ENCODE measurements at regions of chr1 and their contacts with region 1.

Region 1: GRCh38 chr1:220272047-220272840 is at the start of gene RAB3GAP2:
- DNase-seq: peak; percentile 96
- H3K4me3 Mint-ChIP-seq: no peak within 1 kb of the TSS
- H3K27ac Mint-ChIP-seq: no peak within 1 kb of the TSS
- H3K4me1 Mint-ChIP-seq: peaks cover 17% of the 10 kb centered on the region
- H3K27me3 Mint-ChIP-seq: peaks cover 12% of the 10 kb centered on the region
- total RNA-seq, gene RAB3GAP2: 55.0 and 60.0 TPM in 2 replicates

Region 2: GRCh38 chr1:219173758-219174588 is 1098.3 kb before region 1 on chr1 and contains the start of gene LYPLAL1:
- intact Hi-C with region 1: loop called (anchors 5 kb)
- DNase-seq: peak; percentile 97
- H3K4me3 Mint-ChIP-seq: peak within 1 kb of the TSS; percentile 99
- H3K27ac Mint-ChIP-seq: peak within 1 kb of the TSS; percentile 98
- H3K4me1 Mint-ChIP-seq: peaks cover 29% of the 10 kb centered on the region
- H3K27me3 Mint-ChIP-seq: no peaks in the 10 kb centered on the region
- total RNA-seq, gene LYPLAL1: 19.7 and 22.9 TPM in 2 replicates

Region 3: GRCh38 chr1:220089650-220090556 is 182.3 kb before region 1 on chr1 and contains the start of gene BPNT1:
- intact Hi-C with region 1: loop called (anchors 1 kb)
- DNase-seq: peak; percentile 99
- H3K4me3 Mint-ChIP-seq: peak within 1 kb of the TSS; percentile 92
- H3K27ac Mint-ChIP-seq: peak within 1 kb of the TSS; percentile 87
- H3K4me1 Mint-ChIP-seq: peaks cover 16% of the 10 kb centered on the region
- H3K27me3 Mint-ChIP-seq: no peaks in the 10 kb centered on the region
- total RNA-seq, gene BPNT1: 24.9 and 27.2 TPM in 2 replicates

Region 4: GRCh38 chr1:220229771-220230170 is 42.5 kb before region 1 on chr1:
- intact Hi-C with region 1: loop called (anchors 5 kb)
- DNase-seq: no peak
- H3K4me3 Mint-ChIP-seq: no peak overlapping the region
- H3K27ac Mint-ChIP-seq: no peak overlapping the region
- H3K4me1 Mint-ChIP-seq: peaks cover 6% of the 10 kb centered on the region
- H3K27me3 Mint-ChIP-seq: no peaks in the 10 kb centered on the region

Region 5: DNA sequence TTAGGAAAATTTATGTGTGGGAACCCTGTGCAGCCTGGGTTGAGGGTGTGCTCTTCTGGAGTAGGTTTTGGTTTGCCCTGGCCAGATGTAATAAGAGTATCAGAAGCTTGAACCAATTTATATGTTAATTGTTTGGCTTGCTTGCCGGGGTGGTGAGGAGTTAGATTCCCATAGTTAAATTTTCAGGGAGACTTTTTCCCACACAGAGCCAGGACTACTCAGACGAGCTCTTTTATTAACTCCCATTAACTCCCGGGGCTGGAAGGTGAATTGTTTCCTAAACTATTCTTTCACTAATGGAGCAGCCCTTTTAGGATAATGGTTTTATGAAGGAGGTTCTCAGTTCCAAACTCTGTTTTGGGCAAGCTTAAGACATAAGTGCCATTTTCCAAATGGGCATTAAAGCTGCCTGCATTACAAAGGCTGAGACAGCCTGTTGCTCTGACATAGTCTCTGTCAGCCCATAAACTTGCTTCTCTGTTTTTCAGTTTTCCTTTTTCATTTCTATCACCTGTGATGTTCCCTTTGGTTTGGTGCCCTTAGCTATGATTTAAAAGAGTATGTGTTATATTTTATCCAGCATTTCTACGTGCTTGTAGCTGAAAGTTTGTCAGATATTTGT is 18.0 kb after region 1 on chr1:
- intact Hi-C with region 1: no loop called
- DNase-seq: no peak
- H3K4me3 Mint-ChIP-seq: no peak overlapping the region
- H3K27ac Mint-ChIP-seq: no peak overlapping the region
- H3K4me1 Mint-ChIP-seq: no peaks in the 10 kb centered on the region
- H3K27me3 Mint-ChIP-seq: peaks cover 28% of the 10 kb centered on the region

Region 6: GRCh38 chr1:220344745-220345144 is 72.5 kb after region 1 on chr1:
- intact Hi-C with region 1: no loop called
- DNase-seq: no peak
- H3K4me3 Mint-ChIP-seq: no peak overlapping the region
- H3K27ac Mint-ChIP-seq: no peak overlapping the region
- H3K4me1 Mint-ChIP-seq: no peaks in the 10 kb centered on the region
- H3K27me3 Mint-ChIP-seq: peaks cover 5% of the 10 kb centered on the region

Region 7: DNA sequence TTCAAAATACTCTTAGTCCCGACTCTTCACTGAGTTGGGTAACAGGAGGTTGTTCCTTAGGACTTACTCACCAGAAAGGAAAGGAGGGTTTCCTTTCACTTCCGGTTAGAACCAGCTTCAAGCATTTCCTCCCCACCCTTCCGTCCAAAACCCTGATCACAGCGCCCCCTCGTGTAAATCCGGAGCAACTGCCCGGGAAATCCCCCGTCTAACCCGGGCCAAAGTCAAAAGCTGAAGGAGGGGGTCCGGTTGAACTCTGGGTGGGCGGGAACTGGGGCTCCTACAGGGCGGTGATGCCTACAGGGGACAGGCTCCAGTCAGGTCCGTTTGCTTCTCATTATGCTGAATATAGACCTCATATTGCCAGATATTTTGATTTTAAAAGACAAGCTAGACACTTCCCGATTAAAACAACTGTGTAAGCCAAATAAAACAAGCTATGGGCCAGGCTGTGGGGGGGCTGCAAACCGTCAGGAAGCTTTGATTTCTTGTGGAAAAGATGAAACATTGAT is 460.9 kb after region 1 on chr1:
- intact Hi-C with region 1: loop called (anchors 5 kb)
- DNase-seq: peak; percentile 93
- H3K4me3 Mint-ChIP-seq: peak overlapping the region; percentile 37
- H3K27ac Mint-ChIP-seq: no peak overlapping the region
- H3K4me1 Mint-ChIP-seq: peaks cover 2% of the 10 kb centered on the region
- H3K27me3 Mint-ChIP-seq: peaks cover 15% of the 10 kb centered on the region

Measured in activated CD4-positive, alpha-beta T cell treated with anti-CD3 and anti-CD28 coated beads, Interleukin-2, amount 10 ng/mL, durations not matched to agents 24 days and 14 days (primary cell).